ENCODE measurements at regions of chr12 and their contacts with region 1.

Region 1: DNA sequence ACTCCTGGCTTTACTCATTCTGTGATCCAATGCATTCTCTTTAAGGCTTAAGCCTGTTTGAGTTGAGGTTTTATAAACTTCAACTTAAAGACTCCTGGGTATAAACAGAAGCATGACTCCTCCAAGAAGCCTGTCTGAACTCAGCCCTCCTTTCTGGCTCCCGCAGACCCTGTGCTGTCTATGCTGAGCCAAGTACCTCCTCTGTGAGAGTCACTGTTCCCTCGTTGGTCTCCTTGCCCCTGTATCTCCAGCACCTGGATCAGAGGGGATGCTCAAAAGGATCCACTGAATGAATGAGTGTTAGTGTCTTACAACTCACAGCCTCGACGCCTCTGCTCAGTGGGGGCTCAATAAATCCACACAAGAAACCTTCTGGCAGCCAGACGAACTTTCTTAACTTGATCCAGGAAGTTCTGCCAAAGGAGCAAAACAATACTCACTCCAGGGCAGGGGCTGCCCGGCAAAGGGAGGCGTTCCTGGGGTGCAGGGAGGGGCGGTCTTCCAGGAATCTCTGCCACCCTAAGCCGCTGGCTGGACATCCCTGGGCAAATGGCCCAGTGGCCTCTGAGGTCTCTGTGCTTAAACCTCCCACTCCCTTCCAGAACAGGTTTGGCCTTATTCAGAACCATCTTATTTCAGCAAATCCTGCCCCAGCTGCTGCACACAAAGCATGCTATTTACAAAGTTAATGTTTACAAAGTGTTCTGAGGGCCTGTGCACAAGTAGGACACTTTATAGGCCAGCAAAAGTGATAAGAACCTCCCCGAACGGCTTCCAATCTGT is 32.9 kb downstream of the MAP1LC3B2 start:
- H3K4me3 Mint-ChIP-seq: peak overlapping the region; percentile 5
- H3K27ac Mint-ChIP-seq: peak overlapping the region; percentile 70
- H3K4me1 Mint-ChIP-seq: peaks cover 28% of the 10 kb centered on the region
- H3K27me3 Mint-ChIP-seq: peaks cover 6% of the 10 kb centered on the region

Region 2: GRCh38 chr12:116551952-116552772 is 39.9 kb before region 1 on chr12:
- intact Hi-C with region 1: loop called (anchors 5 kb)
- H3K4me3 Mint-ChIP-seq: no peak overlapping the region
- H3K27ac Mint-ChIP-seq: no peak overlapping the region
- H3K4me1 Mint-ChIP-seq: peaks cover 25% of the 10 kb centered on the region
- H3K27me3 Mint-ChIP-seq: peaks cover 6% of the 10 kb centered on the region